ENCODE measurements at regions of chr1 and their contacts with region 1.

Region 1: GRCh38 chr1:246002725-246003441 is 504.2 kb downstream of the SMYD3 start:
- DNase-seq: peak; percentile 82
- ATAC-seq: peak; percentile 65
- H3K4me3 ChIP-seq: no peak overlapping the region
- H3K4me3 Mint-ChIP-seq: no peak overlapping the region
- H3K27ac ChIP-seq: no peak overlapping the region
- H3K27ac Mint-ChIP-seq: no peak overlapping the region
- H3K4me1 ChIP-seq: no peaks in the 10 kb centered on the region
- H3K4me1 Mint-ChIP-seq: peaks cover 9% of the 10 kb centered on the region
- H3K27me3 ChIP-seq: no peaks in the 10 kb centered on the region
- H3K27me3 Mint-ChIP-seq: no peaks in the 10 kb centered on the region
- CTCF ChIP-seq: peak; percentile 90

Region 2: DNA sequence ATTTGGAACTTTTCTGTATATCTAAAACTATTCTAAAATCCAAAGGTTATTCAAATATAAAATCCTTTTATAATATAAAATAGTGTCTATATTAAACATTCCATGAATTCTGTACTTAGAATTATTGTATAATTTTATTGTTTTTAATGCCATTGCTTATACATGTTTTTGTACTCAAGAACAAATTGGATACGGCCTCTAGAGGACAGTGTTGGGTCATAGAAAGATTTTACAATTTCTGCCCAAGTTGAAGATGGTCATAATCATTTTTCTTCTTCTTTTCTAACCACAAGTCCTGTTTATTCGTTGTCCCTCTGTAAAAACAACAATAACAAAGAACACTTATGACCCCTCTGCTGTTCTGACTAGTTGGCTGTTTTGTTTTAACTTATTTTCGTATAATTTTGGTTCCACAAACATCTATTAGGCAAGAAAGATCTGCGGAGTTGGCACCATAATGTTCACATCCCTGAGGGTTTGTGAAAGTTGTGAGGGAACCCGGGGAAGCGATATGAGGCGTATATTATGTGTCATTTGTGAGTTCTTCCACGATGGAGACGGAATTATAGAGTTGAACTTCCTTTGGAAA is 923.8 kb before region 1 on chr1:
- CTCF ChIA-PET with region 1: interaction called, 4 read pairs
- POLR2A ChIA-PET with region 1: no interaction called
- intact Hi-C with region 1: loop called (anchors 2 kb)
- DNase-seq: no peak
- ATAC-seq: no peak
- H3K4me3 ChIP-seq: no peak overlapping the region
- H3K4me3 Mint-ChIP-seq: no peak overlapping the region
- H3K27ac ChIP-seq: no peak overlapping the region
- H3K27ac Mint-ChIP-seq: no peak overlapping the region
- H3K4me1 ChIP-seq: no peaks in the 10 kb centered on the region
- H3K4me1 Mint-ChIP-seq: no peaks in the 10 kb centered on the region
- H3K27me3 ChIP-seq: no peaks in the 10 kb centered on the region
- H3K27me3 Mint-ChIP-seq: no peaks in the 10 kb centered on the region
- CTCF ChIP-seq: peak; percentile 59

Region 3: DNA sequence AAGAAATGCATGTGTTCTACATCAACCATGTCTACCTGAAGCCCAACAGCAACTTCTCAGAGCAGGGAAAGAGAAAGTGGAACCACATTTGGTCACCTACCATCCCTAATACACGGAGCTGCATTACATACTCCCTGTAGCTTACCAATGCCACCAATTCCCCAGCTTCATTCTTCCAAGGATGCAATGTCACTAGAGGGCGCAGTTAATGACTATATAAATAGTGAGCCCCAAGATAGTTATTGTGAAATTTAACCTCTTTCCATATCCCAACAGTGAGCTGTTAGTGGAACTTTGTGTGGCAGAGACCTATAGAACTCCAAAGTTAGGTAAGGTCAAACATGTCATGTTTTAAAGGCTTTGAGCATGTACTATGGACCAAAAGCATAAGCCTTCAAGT is 114.1 kb before region 1 on chr1:
- CTCF ChIA-PET with region 1: interaction called, 16 read pairs
- POLR2A ChIA-PET with region 1: no interaction called
- intact Hi-C with region 1: loop called (anchors 1 kb)
- DNase-seq: peak; percentile 21
- ATAC-seq: no peak
- H3K4me3 ChIP-seq: no peak overlapping the region
- H3K4me3 Mint-ChIP-seq: no peak overlapping the region
- H3K27ac ChIP-seq: no peak overlapping the region
- H3K27ac Mint-ChIP-seq: no peak overlapping the region
- H3K4me1 ChIP-seq: no peaks in the 10 kb centered on the region
- H3K4me1 Mint-ChIP-seq: no peaks in the 10 kb centered on the region
- H3K27me3 ChIP-seq: no peaks in the 10 kb centered on the region
- H3K27me3 Mint-ChIP-seq: no peaks in the 10 kb centered on the region
- CTCF ChIP-seq: peak; percentile 19

Measured in B cell (primary cell).